ENCODE measurements at regions of chr7 and their contacts with region 1.

Region 1: DNA sequence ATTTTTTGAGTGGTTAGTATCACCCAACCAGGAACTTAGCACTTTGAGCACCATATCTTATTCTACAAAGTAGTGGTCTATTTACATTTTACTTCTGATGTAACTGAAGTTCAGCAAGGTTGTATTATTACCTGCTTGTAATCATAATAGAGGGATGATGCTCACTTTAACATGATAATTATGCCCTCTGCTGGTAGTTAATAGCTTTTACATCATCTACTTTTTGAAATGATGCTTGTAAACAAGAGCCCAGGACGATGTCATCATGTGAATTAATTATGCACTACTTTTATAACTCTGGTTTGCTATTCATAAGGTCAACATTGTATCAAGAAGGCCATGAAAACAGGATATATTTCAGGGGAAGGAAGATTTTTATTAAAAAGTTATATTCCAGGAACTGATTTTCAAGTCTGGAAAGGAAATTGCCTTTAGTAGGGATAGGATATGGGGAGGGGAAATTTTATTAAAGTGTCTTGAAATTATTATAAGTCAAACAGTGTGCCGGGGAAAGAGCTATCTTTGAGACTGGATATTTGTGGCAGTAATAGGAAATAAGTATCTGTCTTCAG is 80.3 kb upstream of the SCIN start:
- DNase-seq: peak in 2 of 9 experiments; percentile 20 to 37
- ATAC-seq: no peak
- H3K4me3 ChIP-seq: no peak overlapping the region
- H3K4me3 Mint-ChIP-seq: no peak overlapping the region
- H3K27ac ChIP-seq: no peak overlapping the region
- H3K27ac Mint-ChIP-seq: no peak overlapping the region
- H3K4me1 ChIP-seq: no peaks in the 10 kb centered on the region
- H3K4me1 Mint-ChIP-seq: no peaks in the 10 kb centered on the region
- H3K27me3 ChIP-seq: no peaks in the 10 kb centered on the region
- H3K27me3 Mint-ChIP-seq: peaks cover 2% of the 10 kb centered on the region
- CTCF ChIP-seq: peak; percentile 59

Region 2: DNA sequence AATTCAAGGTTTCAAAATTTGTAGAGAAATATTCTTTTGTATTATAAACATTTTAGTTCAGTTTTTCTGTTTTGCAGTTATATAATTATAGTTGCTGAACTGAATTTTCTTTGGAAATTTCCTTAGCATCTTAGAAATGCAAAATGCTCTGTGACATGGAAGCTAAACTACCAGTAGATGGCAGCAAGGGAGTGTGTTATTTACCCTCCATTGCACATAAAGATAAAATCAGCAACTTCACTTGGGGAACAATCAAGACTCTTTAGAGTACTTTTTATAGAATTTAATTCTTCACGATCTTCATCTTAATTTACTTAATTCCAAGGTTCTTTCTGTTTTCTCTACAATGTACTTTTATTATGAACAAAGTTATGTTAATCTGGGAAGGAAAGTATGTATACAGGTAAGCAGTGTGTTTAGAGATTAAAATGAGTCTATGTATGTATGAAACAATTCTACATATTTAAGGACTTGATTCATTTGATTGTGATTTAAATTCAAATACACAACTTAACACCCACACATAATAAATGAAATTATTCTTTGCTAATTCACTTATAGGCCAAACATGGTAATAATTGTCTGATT is 1062.4 kb before region 1 on chr7:
- CTCF ChIA-PET with region 1: no interaction called
- POLR2A ChIA-PET with region 1: no interaction called
- intact Hi-C with region 1: loop called (anchors 5 kb)
- DNase-seq: peak in 2 of 9 experiments; percentile 12 to 28
- ATAC-seq: no peak
- H3K4me3 ChIP-seq: no peak overlapping the region
- H3K4me3 Mint-ChIP-seq: no peak overlapping the region
- H3K27ac ChIP-seq: no peak overlapping the region
- H3K27ac Mint-ChIP-seq: no peak overlapping the region
- H3K4me1 ChIP-seq: no peaks in the 10 kb centered on the region
- H3K4me1 Mint-ChIP-seq: no peaks in the 10 kb centered on the region
- H3K27me3 ChIP-seq: no peaks in the 10 kb centered on the region
- H3K27me3 Mint-ChIP-seq: no peaks in the 10 kb centered on the region
- CTCF ChIP-seq: no peak

Region 3: GRCh38 chr7:12067141-12067831 is 422.9 kb before region 1 on chr7:
- CTCF ChIA-PET with region 1: no interaction called
- POLR2A ChIA-PET with region 1: no interaction called
- intact Hi-C with region 1: loop called in 1 of 2 experiments (anchors 2 kb)
- DNase-seq: peak; percentile 22 to 76 (median 59)
- ATAC-seq: peak; percentile 61
- H3K4me3 ChIP-seq: no peak overlapping the region
- H3K4me3 Mint-ChIP-seq: no peak overlapping the region
- H3K27ac ChIP-seq: no peak overlapping the region
- H3K27ac Mint-ChIP-seq: no peak overlapping the region
- H3K4me1 ChIP-seq: no peaks in the 10 kb centered on the region
- H3K4me1 Mint-ChIP-seq: no peaks in the 10 kb centered on the region
- H3K27me3 ChIP-seq: no peaks in the 10 kb centered on the region
- H3K27me3 Mint-ChIP-seq: no peaks in the 10 kb centered on the region
- CTCF ChIP-seq: peak; percentile 66

Region 4: GRCh38 chr7:12328888-12329770 is 161.1 kb before region 1 on chr7:
- CTCF ChIA-PET with region 1: no interaction called
- POLR2A ChIA-PET with region 1: no interaction called
- intact Hi-C with region 1: loop called in 1 of 2 experiments (anchors 5 kb)
- DNase-seq: no peak
- ATAC-seq: no peak
- H3K4me3 ChIP-seq: no peak overlapping the region
- H3K4me3 Mint-ChIP-seq: no peak overlapping the region
- H3K27ac ChIP-seq: no peak overlapping the region
- H3K27ac Mint-ChIP-seq: no peak overlapping the region
- H3K4me1 ChIP-seq: no peaks in the 10 kb centered on the region
- H3K4me1 Mint-ChIP-seq: no peaks in the 10 kb centered on the region
- H3K27me3 ChIP-seq: no peaks in the 10 kb centered on the region
- H3K27me3 Mint-ChIP-seq: no peaks in the 10 kb centered on the region
- CTCF ChIP-seq: no peak

Region 5: GRCh38 chr7:12389089-12389700 is 101.0 kb before region 1 on chr7:
- CTCF ChIA-PET with region 1: interaction called, 10 read pairs
- POLR2A ChIA-PET with region 1: no interaction called
- intact Hi-C with region 1: loop called (anchors 2 kb)
- DNase-seq: peak in 4 of 9 experiments; percentile 26 to 63 (median 40)
- ATAC-seq: peak; percentile 78
- H3K4me3 ChIP-seq: no peak overlapping the region
- H3K4me3 Mint-ChIP-seq: no peak overlapping the region
- H3K27ac ChIP-seq: no peak overlapping the region
- H3K27ac Mint-ChIP-seq: no peak overlapping the region
- H3K4me1 ChIP-seq: no peaks in the 10 kb centered on the region
- H3K4me1 Mint-ChIP-seq: no peaks in the 10 kb centered on the region
- H3K27me3 ChIP-seq: no peaks in the 10 kb centered on the region
- H3K27me3 Mint-ChIP-seq: peaks cover 2% of the 10 kb centered on the region
- CTCF ChIP-seq: peak; percentile 89

Region 6: GRCh38 chr7:12458520-12459131 is 31.6 kb before region 1 on chr7:
- CTCF ChIA-PET with region 1: interaction called, 9 read pairs
- POLR2A ChIA-PET with region 1: no interaction called
- intact Hi-C with region 1: loop called in 1 of 2 experiments (anchors 2 kb)
- DNase-seq: peak in 2 of 9 experiments; percentile 35
- ATAC-seq: peak; percentile 62
- H3K4me3 ChIP-seq: no peak overlapping the region
- H3K4me3 Mint-ChIP-seq: no peak overlapping the region
- H3K27ac ChIP-seq: no peak overlapping the region
- H3K27ac Mint-ChIP-seq: no peak overlapping the region
- H3K4me1 ChIP-seq: no peaks in the 10 kb centered on the region
- H3K4me1 Mint-ChIP-seq: no peaks in the 10 kb centered on the region
- H3K27me3 ChIP-seq: no peaks in the 10 kb centered on the region
- H3K27me3 Mint-ChIP-seq: peaks cover 8% of the 10 kb centered on the region
- CTCF ChIP-seq: peak; percentile 62